ENCODE measurements at regions of chr6 and their contacts with region 1.

Region 1: GRCh38 chr6:43506667-43507471 is 3.3 kb downstream of the LRRC73 start:
- DNase-seq: peak; percentile 71
- ATAC-seq: peak; percentile 74
- H3K4me3 ChIP-seq: no peak overlapping the region
- H3K27ac ChIP-seq: no peak overlapping the region
- H3K4me1 ChIP-seq: peaks cover 14% of the 10 kb centered on the region
- H3K27me3 ChIP-seq: no peaks in the 10 kb centered on the region
- CTCF ChIP-seq: peak; percentile 98

Region 2: DNA sequence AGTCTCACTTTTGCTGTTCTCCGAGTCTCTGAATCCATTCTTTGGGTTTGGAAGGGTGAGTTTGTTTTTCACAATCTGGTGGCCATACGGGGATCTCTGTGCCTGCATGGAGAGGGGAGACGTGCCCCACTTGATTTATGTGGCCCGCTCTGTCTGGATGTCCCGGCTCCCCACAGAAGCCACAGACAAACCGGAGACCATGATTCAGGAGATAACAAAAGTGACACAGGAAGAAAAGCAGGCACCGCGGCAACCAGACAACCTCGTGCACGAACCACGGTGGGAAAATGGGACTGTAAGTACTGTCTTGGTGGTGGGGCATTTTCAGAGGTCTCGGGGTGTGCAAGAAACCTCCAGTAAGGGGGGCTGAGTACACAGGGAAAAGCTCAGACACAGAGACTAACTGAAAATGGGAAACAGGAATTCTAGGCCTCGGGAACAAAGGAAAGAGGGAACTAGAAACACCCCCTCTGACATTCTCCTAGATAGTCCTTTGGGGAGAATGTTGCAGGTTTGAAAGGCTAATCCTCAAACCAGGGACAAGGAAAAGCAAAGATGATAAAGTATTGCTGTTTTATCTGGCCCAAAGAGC is 115.3 kb before region 1 on chr6:
- CTCF ChIA-PET with region 1: no interaction called
- POLR2A ChIA-PET with region 1: interaction called, 10 read pairs
- in situ Hi-C with region 1: no loop called
- intact Hi-C with region 1: no loop called
- DNase-seq: no peak
- ATAC-seq: no peak
- H3K4me3 ChIP-seq: no peak overlapping the region
- H3K27ac ChIP-seq: no peak overlapping the region
- H3K4me1 ChIP-seq: no peaks in the 10 kb centered on the region
- H3K27me3 ChIP-seq: no peaks in the 10 kb centered on the region
- CTCF ChIP-seq: no peak

Region 3: GRCh38 chr6:43454696-43455530 is 52.0 kb before region 1 on chr6:
- CTCF ChIA-PET with region 1: interaction called, 16 read pairs
- POLR2A ChIA-PET with region 1: interaction called, 3 read pairs
- in situ Hi-C with region 1: no loop called
- intact Hi-C with region 1: loop called (anchors 2 kb)
- DNase-seq: no peak
- ATAC-seq: peak; percentile 82
- H3K4me3 ChIP-seq: peak overlapping the region; percentile 59 to 63
- H3K27ac ChIP-seq: peak overlapping the region; percentile 68
- H3K4me1 ChIP-seq: peaks cover 13% of the 10 kb centered on the region
- H3K27me3 ChIP-seq: no peaks in the 10 kb centered on the region
- CTCF ChIP-seq: peak; percentile 61

Region 4: DNA sequence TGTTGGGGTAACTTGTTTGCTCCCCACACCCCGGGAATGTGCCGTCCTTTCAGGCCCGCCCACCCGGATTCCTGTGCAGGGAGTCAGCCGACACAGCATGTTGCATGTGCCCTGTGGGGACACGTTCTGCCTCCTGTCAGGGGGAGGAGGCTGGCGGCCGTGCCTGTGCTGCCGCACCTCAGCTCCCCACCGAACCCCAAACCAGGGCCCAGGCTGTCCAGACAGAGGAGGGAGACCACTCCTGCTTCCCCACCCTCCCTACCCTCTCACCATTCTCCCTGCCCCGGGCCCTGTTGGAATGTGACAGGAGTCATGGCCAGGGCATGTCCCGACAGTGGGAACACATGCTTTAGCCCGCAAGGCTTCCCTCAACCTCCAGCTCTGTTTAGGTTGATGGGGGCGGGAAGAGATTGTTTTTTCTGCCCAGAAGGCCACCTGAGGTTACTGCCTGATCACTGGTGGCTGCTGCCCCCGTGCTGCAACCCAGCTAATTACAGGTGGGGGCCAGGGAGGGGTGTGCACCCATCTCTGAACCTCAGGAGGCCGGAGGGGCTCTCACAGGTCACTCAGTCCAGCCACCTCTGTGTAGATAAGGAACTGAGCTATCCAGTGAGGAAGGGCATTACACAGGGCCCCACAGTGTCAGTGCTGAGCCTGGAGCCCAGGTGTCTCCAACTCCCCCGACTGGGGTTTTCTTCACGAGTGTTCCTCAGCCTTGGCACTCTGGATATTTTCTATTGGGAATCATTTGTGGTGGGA is 10.3 kb before region 1 on chr6:
- CTCF ChIA-PET with region 1: interaction called, 3 read pairs
- POLR2A ChIA-PET with region 1: interaction called, 16 read pairs
- in situ Hi-C with region 1: no loop called
- intact Hi-C with region 1: no loop called
- DNase-seq: no peak
- ATAC-seq: peak; percentile 57
- H3K4me3 ChIP-seq: no peak overlapping the region
- H3K27ac ChIP-seq: no peak overlapping the region
- H3K4me1 ChIP-seq: peaks cover 19% of the 10 kb centered on the region
- H3K27me3 ChIP-seq: no peaks in the 10 kb centered on the region
- CTCF ChIP-seq: peak; percentile 80

Measured in Panc1 (cell line).